Aorta (tissue), 5 donors: ENCODE measurements at regions of chr12 and their contacts with region 1.

Region 1: GRCh38 chr12:575948-576612 is 87.2 kb downstream of the NINJ2 start:
- DNase-seq: peak; percentile 88 to 95
- ATAC-seq: peak; percentile 92
- H3K4me3 ChIP-seq: no peak overlapping the region
- H3K27ac ChIP-seq: peak overlapping the region in 1 of 2 donors; percentile 58
- H3K4me1 ChIP-seq: no peaks in the 10 kb centered on the region
- H3K27me3 ChIP-seq: no peaks in the 10 kb centered on the region

Region 2: DNA sequence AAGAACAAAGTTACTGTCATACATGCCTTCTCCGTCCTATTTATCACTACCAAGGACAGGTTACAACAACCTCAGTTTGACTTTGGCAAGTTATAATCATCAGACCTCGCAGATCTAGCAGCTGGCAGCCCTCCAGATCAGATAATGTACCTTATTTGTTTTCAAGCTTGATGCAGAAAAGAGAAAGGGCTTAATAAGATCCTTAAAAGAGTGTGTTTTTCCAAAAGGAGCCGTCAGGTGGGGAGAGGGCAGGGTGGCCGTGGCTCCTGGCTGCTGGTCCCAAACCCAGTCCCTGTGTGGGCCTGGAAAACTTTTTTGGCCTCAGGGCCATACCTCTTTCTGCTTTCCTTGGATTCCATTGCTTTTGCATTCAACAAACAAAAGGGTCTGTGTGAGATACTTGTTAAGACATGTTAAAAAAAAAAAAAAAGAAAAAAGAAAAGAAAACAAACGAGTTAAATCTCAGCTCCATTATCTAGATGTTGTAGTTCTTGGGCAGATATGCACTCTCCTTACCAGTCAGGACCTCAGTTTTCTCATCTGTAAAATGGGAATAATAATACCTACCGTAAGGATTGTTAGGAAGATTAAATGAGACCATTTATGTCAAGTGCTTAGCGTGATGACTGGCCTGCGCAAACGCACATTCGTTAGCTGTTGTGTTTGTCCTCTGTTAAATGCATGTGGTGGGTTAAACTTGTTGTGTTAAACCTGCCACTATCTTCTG is 51.7 kb before region 1 on chr12:
- intact Hi-C with region 1: no loop called
- DNase-seq: no peak
- ATAC-seq: no peak
- H3K4me3 ChIP-seq: no peak overlapping the region
- H3K27ac ChIP-seq: no peak overlapping the region
- H3K4me1 ChIP-seq: no peaks in the 10 kb centered on the region
- H3K27me3 ChIP-seq: no peaks in the 10 kb centered on the region

Region 3: GRCh38 chr12:630656-631632 is 54.9 kb after region 1 on chr12:
- intact Hi-C with region 1: loop called in 1 of 2 experiments (anchors 5 kb)
- DNase-seq: peak in 1 of 2 donors; percentile 85
- ATAC-seq: peak; percentile 80
- H3K4me3 ChIP-seq: no peak overlapping the region
- H3K27ac ChIP-seq: no peak overlapping the region
- H3K4me1 ChIP-seq: peaks cover 2% of the 10 kb centered on the region in 2 donors
- H3K27me3 ChIP-seq: no peaks in the 10 kb centered on the region

Region 4: DNA sequence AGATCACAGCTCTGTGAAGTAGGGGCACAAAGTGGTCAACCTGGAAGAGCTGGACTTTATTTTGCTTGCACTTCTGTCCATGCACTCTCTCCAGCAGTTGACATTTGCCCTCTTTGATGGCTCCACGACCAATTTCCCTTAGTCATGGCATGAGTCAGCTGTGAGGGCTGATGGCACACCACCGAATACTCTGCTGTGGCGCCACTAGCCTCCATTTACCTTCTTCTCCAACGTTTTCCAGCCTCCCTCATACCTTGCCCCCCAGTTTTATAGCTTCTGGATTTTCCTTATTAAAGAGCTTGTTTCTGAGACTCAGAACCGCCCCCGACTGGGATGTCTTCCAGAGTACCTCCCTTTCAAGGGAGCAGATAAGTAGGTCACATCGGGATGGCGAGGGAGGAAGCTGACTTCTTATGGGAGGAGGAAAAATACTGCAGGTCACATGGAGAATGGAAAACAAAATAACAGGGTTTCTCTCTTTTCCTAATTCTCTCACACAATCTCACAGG is 69.5 kb after region 1 on chr12:
- intact Hi-C with region 1: loop called in 1 of 2 experiments (anchors 5 kb)
- DNase-seq: peak in 1 of 2 donors; percentile 70
- ATAC-seq: peak; percentile 57
- H3K4me3 ChIP-seq: no peak overlapping the region
- H3K27ac ChIP-seq: peak overlapping the region; percentile 6 to 81
- H3K4me1 ChIP-seq: peaks cover 0 to 4% of the 10 kb centered on the region in 2 donors
- H3K27me3 ChIP-seq: no peaks in the 10 kb centered on the region

Region 5: DNA sequence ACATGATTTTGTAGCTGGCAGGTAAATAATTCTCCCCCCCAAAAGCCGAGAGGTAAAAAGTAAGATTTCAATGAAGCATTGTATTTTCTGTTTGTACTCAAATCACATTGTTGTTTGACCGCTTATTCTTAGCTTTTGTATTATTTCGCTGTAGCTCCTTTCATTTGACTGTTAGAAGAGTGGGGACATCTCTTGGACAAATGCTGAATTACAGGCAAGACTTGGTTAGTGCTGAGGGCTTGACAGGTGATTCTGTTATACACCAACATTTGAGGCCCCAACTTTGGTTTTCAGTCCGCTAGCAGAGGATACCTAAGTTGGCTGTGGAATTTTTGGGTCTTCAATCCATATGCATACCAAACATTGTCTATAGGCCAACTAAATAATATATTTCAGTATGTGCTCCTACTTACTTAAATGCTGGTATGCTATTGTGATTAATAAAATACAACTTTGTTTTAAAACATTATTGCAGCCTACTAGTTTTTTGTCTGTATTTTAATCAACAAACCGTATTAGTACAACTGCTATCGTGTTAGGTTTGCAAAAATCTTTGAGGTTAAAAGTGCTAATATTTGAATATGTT is 517.2 kb after region 1 on chr12:
- intact Hi-C with region 1: loop called in 1 of 2 experiments (anchors 10 kb)
- DNase-seq: no peak
- ATAC-seq: no peak
- H3K4me3 ChIP-seq: no peak overlapping the region
- H3K27ac ChIP-seq: no peak overlapping the region
- H3K4me1 ChIP-seq: peaks cover 0 to 4% of the 10 kb centered on the region in 2 donors
- H3K27me3 ChIP-seq: no peaks in the 10 kb centered on the region

Region 6: DNA sequence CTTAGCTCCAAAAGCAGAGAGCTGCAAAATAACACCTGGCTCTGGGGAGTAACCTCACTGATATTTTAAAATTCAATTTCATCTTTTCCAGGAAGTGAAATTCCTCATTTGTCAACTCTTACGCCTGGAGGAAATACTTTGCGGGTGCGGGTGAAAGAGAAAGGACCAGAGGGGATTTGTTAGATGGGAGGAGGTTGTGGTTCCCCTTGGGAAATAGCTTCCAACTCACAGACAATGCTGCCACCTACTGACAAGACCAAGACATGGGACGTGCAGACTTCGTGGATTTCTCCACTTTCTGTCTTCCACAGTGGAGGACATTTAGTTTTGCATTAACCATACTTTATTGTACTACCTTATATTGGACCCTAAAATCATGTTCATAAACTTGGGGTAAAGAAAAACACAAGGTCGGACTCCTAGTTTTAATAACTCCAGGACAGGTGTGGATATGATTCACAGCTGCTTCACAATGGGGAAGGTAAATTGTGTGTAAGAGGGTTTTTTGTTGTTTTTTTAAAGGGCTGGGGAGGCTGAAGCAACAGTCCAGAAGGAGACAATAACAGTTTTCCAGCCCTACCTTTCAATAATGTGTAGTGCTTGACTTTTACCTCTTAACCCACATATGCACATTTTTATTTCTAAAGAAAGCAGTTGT is 1007.5 kb after region 1 on chr12:
- intact Hi-C with region 1: loop called in 1 of 2 experiments (anchors 10 kb)
- DNase-seq: peak; percentile 62 to 71
- ATAC-seq: peak; percentile 91
- H3K4me3 ChIP-seq: no peak overlapping the region
- H3K27ac ChIP-seq: no peak overlapping the region
- H3K4me1 ChIP-seq: no peaks in the 10 kb centered on the region
- H3K27me3 ChIP-seq: no peaks in the 10 kb centered on the region